ENCODE measurements at regions of chr11 and their contacts with region 1.

Region 1: GRCh38 chr11:67288452-67289225 is 464 bp upstream of the ANKRD13D start:
- DNase-seq: peak; percentile 90 to 94 (median 92)
- ATAC-seq: peak; percentile 86
- H3K4me3 ChIP-seq: peak overlapping the region; percentile 71
- H3K27ac ChIP-seq: peak overlapping the region; percentile 93
- H3K4me1 ChIP-seq: peaks cover 15 to 56% of the 10 kb centered on the region in 2 experiments
- H3K27me3 ChIP-seq: no peaks in the 10 kb centered on the region
- CTCF ChIP-seq: peak in 2 of 3 experiments; percentile 50 to 65; a peak in 4 of 6 replicates
- EP300 ChIP-seq: peak; percentile 73
- POLR2A ChIP-seq: peak; percentile 91
- RAD21 ChIP-seq: peak; percentile 60 to 65

Region 2: GRCh38 chr11:67271541-67272284 is 16.9 kb before region 1 on chr11:
- CTCF ChIA-PET with region 1: interaction called, 5 read pairs
- POLR2A ChIA-PET with region 1: interaction called, 29 read pairs
- in situ Hi-C with region 1: no loop called
- intact Hi-C with region 1: loop called (anchors 1 kb)
- DNase-seq: no peak
- ATAC-seq: no peak
- H3K4me3 ChIP-seq: no peak overlapping the region
- H3K27ac ChIP-seq: no peak overlapping the region
- H3K4me1 ChIP-seq: peaks cover 41 to 90% of the 10 kb centered on the region in 2 experiments
- H3K27me3 ChIP-seq: no peaks in the 10 kb centered on the region
- CTCF ChIP-seq: no peak
- EP300 ChIP-seq: no peak
- POLR2A ChIP-seq: no peak
- RAD21 ChIP-seq: no peak

Region 3: DNA sequence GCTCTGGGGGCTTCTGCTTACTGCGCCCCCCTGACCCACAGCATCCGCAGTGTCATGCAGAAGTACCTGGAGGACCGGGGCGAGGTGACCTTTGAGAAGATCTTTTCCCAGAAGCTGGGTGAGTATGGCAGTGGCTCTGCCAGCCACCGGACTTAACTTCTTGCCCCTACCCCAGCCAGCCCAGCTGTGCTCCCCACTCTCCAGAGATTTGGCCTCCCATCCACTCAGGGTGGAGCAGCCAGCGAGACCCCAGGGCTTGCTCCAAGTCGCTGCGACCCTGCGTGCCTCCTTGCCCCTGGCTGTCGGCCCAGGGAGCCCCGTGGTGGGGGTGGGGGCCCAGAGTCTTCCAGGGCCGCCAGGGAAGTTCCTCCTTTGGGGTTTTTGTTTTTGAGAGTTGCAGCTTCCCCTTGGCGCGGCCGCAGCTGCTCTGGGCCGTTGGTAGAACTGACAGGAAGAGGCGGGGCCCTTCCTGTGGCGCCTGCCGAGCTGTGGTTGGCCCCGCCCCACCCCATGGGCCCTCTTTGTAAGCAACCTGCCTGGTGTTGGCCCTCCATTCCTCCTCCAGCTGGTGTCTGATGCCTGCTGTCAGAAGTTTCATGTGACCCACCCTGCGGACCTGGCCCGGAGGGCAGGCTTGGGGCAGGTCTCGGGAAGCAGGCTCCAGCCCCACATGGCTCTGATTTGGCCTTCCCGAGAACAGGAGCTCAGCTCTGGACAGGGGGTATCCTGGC is 11.2 kb before region 1 on chr11:
- CTCF ChIA-PET with region 1: no interaction called
- POLR2A ChIA-PET with region 1: interaction called, 29 read pairs
- in situ Hi-C with region 1: no loop called
- intact Hi-C with region 1: loop called (anchors 1 kb)
- DNase-seq: peak; percentile 83 to 94 (median 86)
- ATAC-seq: peak; percentile 95
- H3K4me3 ChIP-seq: peak overlapping the region; percentile 37
- H3K27ac ChIP-seq: peak overlapping the region; percentile 95
- H3K4me1 ChIP-seq: peaks cover 27 to 86% of the 10 kb centered on the region in 2 experiments
- H3K27me3 ChIP-seq: no peaks in the 10 kb centered on the region
- CTCF ChIP-seq: no peak
- EP300 ChIP-seq: peak; percentile 77
- POLR2A ChIP-seq: peak; percentile 81
- RAD21 ChIP-seq: peak in 1 of 2 experiments; percentile 5; a peak in 1 of 4 replicates

Region 4: GRCh38 chr11:67523556-67524479 is 235.2 kb after region 1 on chr11:
- CTCF ChIA-PET with region 1: no interaction called
- POLR2A ChIA-PET with region 1: no interaction called
- in situ Hi-C with region 1: no loop called
- intact Hi-C with region 1: no loop called
- DNase-seq: peak in 1 of 4 experiments; percentile 38
- ATAC-seq: peak; percentile 68
- H3K4me3 ChIP-seq: no peak overlapping the region
- H3K27ac ChIP-seq: no peak overlapping the region
- H3K4me1 ChIP-seq: peaks cover 0 to 35% of the 10 kb centered on the region in 2 experiments; a peak in 3 of 5 replicates
- H3K27me3 ChIP-seq: peaks cover 2 to 27% of the 10 kb centered on the region in 2 experiments; a peak in 4 of 5 replicates
- CTCF ChIP-seq: no peak
- EP300 ChIP-seq: no peak
- POLR2A ChIP-seq: no peak
- RAD21 ChIP-seq: no peak

Region 5: DNA sequence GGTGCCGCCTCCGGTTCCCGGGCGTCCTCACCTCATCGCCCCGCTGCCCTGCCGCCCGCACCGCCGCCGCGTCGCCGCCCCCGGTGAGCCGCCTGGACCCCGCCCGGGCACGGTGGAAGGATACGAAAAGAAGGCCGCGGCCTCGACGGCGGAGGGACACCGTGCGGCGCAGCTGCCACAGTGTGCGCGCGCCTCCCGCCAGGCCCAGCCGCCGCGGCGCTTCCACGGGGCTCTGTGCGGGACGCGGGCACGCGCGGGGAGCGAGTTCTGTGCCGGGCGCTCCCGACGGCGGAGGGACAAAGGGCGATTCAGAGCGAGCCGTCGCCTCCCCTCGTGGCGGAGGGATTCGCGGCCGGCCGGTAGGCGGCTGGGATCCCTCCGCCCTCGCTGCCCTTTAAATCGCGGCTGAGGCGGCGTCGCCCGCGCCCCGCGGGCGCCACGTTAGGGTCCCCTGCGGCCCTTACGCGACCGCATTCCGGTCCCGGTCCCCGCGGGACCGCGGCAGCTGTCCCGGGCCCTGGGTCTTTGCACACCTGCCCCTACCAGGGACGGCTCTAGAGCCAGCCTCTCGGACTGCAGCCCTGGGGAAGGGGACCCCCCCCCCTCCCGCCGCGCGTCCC is 925.0 kb after region 1 on chr11:
- CTCF ChIA-PET with region 1: no interaction called
- POLR2A ChIA-PET with region 1: no interaction called
- in situ Hi-C with region 1: no loop called
- intact Hi-C with region 1: no loop called
- DNase-seq: peak; percentile 85 to 92 (median 87)
- ATAC-seq: peak; percentile 62
- H3K4me3 ChIP-seq: peak overlapping the region; percentile 82
- H3K27ac ChIP-seq: peak overlapping the region; percentile 97
- H3K4me1 ChIP-seq: peaks cover 10 to 36% of the 10 kb centered on the region in 2 experiments; a peak in 4 of 5 replicates
- H3K27me3 ChIP-seq: peaks cover 12 to 37% of the 10 kb centered on the region in 2 experiments; a peak in 4 of 5 replicates
- CTCF ChIP-seq: no peak
- EP300 ChIP-seq: no peak
- POLR2A ChIP-seq: peak; percentile 86
- RAD21 ChIP-seq: no peak